Heart right ventricle (tissue), 16 donors: ENCODE measurements at regions of chr13 and their contacts with region 1.

Region 1: DNA sequence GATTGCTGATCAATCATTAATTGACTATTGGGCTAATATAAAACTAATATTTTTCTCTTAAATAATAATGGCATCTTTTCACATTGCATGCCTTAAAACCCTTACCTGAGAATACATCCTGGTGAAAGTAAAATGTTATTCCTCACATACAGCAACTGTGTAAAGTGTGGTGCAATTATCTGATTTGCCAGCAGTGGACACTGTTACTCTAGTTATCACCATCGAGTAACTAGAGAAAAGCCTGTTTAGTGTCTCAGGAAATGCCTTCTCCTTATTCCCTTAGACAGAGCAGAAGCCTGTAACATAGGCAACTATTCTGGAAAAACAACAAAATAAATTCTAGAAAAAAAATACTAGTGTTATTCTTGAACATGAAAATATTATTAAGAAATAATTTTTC is 459.8 kb downstream of the FGF14 start:
- DNase-seq: peak in 1 of 2 donors; percentile 33
- ATAC-seq: peak; percentile 68 to 93 (median 88)
- H3K4me3 ChIP-seq: no peak overlapping the region
- H3K27ac ChIP-seq: no peak overlapping the region
- H3K4me1 ChIP-seq: peaks cover 0 to 9% (median 4%) of the 10 kb centered on the region in 9 donors
- H3K27me3 ChIP-seq: no peaks in the 10 kb centered on the region
- CTCF ChIP-seq: peak; percentile 59 to 86 (median 71)

Region 2: GRCh38 chr13:101649490-101650126 is 292.4 kb before region 1 on chr13:
- intact Hi-C with region 1: no loop called
- DNase-seq: no peak
- ATAC-seq: peak in 1 of 8 donors; percentile 82
- H3K4me3 ChIP-seq: no peak overlapping the region
- H3K27ac ChIP-seq: no peak overlapping the region
- H3K4me1 ChIP-seq: peaks cover 0 to 6% (median 0%) of the 10 kb centered on the region in 9 donors
- H3K27me3 ChIP-seq: no peaks in the 10 kb centered on the region
- CTCF ChIP-seq: no peak

Region 3: DNA sequence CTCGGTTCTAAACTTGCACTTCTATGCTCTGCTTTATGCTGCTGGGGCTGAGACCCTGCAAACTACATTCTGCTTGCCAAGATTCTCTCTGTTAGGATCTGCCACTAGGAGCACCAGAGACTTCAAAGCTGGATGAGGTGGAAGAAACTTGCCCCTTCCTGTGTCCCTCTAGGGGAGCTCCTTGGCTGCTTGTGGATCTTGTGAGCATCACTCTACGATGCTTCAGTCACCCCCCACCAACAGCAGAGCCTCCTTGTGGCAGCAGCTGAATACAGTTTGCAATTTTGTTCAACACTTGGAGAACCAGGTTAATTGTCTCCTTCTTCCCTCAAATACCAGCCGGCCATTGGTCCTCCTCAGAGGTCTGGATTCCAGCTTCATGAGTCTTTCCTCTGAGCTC is 149.2 kb after region 1 on chr13:
- intact Hi-C with region 1: loop called in 3 of 10 experiments (anchors 10 kb)
- DNase-seq: no peak
- ATAC-seq: peak in 2 of 8 donors; percentile 24 to 44
- H3K4me3 ChIP-seq: no peak overlapping the region
- H3K27ac ChIP-seq: peak overlapping the region in 2 of 10 donors; percentile 57 to 72
- H3K4me1 ChIP-seq: peaks cover 0 to 32% (median 0%) of the 10 kb centered on the region in 9 donors
- H3K27me3 ChIP-seq: no peaks in the 10 kb centered on the region
- CTCF ChIP-seq: peak in 3 of 9 donors; percentile 9 to 15 (median 15)

Region 4: DNA sequence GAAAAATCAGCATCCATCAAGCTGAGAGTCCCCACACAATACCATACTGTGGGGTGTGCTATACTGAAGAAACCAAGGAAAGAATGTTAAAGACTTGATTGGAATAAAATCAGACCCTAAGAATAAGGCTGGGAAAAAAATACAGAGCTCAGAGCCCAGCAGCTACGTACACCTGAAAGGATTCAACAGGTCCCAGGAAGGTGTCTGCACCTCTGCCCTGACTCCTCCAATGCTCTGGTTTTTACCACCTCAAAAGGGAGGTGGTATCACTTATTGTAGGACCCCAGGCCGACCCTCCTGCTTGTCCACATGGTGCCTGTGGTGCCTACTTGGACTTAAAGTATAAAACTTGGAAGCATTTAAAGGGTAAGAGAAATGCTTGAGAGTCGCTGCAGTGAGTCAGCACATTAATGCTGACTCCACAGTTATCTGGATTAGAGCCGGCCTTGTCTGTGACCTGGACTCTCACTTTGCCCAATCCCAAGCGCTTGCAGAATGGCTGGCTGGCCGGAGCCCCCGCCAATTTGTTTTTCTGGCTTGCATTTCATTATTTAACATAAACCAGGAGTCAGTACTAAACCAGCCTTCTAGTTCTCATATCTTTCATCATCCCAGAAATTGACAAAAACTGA is 349.7 kb after region 1 on chr13:
- intact Hi-C with region 1: loop called in 1 of 10 experiments (anchors 10 kb)
- DNase-seq: no peak
- ATAC-seq: peak in 2 of 8 donors; percentile 52 to 83
- H3K4me3 ChIP-seq: no peak overlapping the region
- H3K27ac ChIP-seq: no peak overlapping the region
- H3K4me1 ChIP-seq: peaks cover 0 to 25% (median 10%) of the 10 kb centered on the region in 9 donors
- H3K27me3 ChIP-seq: no peaks in the 10 kb centered on the region
- CTCF ChIP-seq: no peak

Region 5: GRCh38 chr13:102460801-102461200 is 518.8 kb after region 1 on chr13:
- intact Hi-C with region 1: loop called in 9 of 10 experiments (anchors 2 to 5 kb)
- DNase-seq: no peak
- ATAC-seq: no peak
- H3K4me3 ChIP-seq: no peak overlapping the region
- H3K27ac ChIP-seq: no peak overlapping the region
- H3K4me1 ChIP-seq: no peaks in the 10 kb centered on the region
- H3K27me3 ChIP-seq: peaks cover 0 to 9% (median 0%) of the 10 kb centered on the region in 7 donors
- CTCF ChIP-seq: no peak

Region 6: GRCh38 chr13:102555917-102556553 is 614.0 kb after region 1 on chr13:
- intact Hi-C with region 1: loop called (anchors 2 to 10 kb)
- DNase-seq: no peak
- ATAC-seq: peak in 1 of 8 donors; percentile 44
- H3K4me3 ChIP-seq: no peak overlapping the region
- H3K27ac ChIP-seq: no peak overlapping the region
- H3K4me1 ChIP-seq: no peaks in the 10 kb centered on the region
- H3K27me3 ChIP-seq: no peaks in the 10 kb centered on the region
- CTCF ChIP-seq: peak in 7 of 9 donors; percentile 45 to 65 (median 57)